MCF 10A (cell line): ENCODE measurements at regions of chr1 and their contacts with region 1.

Region 1: GRCh38 chr1:91021686-91022517 is at the start of gene ZNF644:
- DNase-seq: peak; percentile 96
- H3K4me3 Mint-ChIP-seq: peak within 1 kb of the TSS; percentile 89
- H3K27ac Mint-ChIP-seq: peak within 1 kb of the TSS; percentile 100
- H3K4me1 Mint-ChIP-seq: peaks cover 10% of the 10 kb centered on the region
- H3K27me3 Mint-ChIP-seq: no peaks in the 10 kb centered on the region
- CTCF ChIP-seq: no peak
- total RNA-seq, gene ZNF644: 43.5 and 46.2 TPM in 2 replicates

Region 2: DNA sequence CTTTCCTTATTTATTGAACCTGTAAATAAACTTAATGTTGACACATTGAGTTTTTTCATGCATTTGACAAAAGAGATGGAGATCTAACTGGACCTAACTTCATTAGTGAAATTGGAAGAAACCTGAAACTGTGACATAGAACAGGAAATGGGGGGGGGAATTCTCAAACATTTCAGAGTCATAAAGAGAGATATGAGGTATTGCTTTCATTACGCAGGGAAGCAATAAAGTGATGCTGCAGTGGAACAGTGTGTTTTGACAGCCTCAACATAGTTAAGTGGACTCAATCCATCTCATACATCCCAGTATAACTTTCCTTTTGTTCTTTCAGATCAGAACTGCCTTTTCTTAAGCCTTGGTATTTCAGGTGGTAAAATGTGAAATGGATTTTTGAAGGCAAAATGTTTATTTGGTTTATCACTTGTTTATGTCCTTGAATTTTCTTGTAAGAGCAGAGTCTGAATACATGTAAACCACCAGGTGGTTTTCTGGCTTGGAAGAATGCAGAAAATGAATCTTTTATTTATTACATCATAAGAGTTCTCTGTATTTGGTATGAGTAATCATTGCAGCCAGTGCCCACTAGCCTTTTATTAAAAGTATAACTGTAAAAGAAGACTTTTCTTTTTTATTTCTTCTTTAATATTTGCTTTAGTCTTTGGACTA is 894.5 kb before region 1 on chr1:
- CTCF ChIA-PET with region 1: no interaction called
- POLR2A ChIA-PET with region 1: no interaction called
- intact Hi-C with region 1: loop called (anchors 10 kb)
- DNase-seq: no peak
- H3K4me3 Mint-ChIP-seq: no peak overlapping the region
- H3K27ac Mint-ChIP-seq: no peak overlapping the region
- H3K4me1 Mint-ChIP-seq: no peaks in the 10 kb centered on the region
- H3K27me3 Mint-ChIP-seq: peaks cover 18% of the 10 kb centered on the region
- CTCF ChIP-seq: no peak

Region 3: DNA sequence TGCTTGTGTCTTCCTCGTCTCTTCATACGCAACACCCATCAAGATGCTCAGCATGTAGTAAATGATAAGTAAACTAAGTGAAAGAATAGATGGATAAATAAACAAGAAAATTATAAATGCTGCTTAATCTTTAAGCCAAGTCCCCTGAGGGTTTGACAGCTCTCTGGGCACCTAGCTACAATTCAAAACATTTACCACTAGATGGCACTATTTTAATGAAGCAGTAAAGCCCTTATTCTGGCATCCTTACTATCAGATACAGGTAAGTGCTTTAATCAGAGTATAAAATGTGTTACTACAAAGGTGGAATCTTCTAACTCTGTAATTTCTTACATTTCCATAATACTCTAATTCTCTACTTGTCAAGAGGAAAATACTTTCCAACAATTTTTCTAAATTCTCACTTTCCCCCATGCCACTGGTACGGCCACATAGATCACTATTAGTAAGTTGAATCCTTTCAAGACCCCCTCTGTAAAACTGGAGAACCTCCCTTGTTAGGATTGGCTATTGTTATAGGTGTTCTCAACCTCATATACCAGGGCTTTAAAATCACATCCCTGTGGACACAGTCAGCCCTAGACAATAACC is 442.6 kb before region 1 on chr1:
- CTCF ChIA-PET with region 1: interaction called, 3 read pairs
- POLR2A ChIA-PET with region 1: no interaction called
- intact Hi-C with region 1: loop called (anchors 10 kb)
- DNase-seq: peak; percentile 48
- H3K4me3 Mint-ChIP-seq: no peak overlapping the region
- H3K27ac Mint-ChIP-seq: no peak overlapping the region
- H3K4me1 Mint-ChIP-seq: peaks cover 8% of the 10 kb centered on the region
- H3K27me3 Mint-ChIP-seq: no peaks in the 10 kb centered on the region
- CTCF ChIP-seq: peak; percentile 41

Region 4: DNA sequence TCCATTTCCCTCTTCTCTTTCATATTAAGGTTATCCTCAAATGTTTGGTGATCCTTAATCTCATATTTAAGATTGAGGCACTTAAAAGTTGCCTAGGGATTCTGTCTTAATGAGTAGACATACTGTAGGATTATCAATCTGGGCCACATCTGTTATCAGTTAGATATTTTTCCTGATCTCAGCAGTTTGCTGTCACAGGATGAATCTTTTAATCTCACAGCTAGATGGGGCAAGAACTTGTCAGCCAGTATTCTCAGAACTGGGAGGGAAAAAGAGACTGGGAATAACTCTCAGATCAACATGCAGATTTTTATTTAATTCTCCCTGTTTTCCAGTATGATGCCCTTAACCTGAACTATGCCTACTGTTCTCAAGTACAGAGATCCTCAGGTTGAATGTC is 14.1 kb before region 1 on chr1:
- CTCF ChIA-PET with region 1: interaction called, 4 read pairs
- POLR2A ChIA-PET with region 1: interaction called, 11 read pairs
- intact Hi-C with region 1: no loop called
- DNase-seq: no peak
- H3K4me3 Mint-ChIP-seq: no peak overlapping the region
- H3K27ac Mint-ChIP-seq: no peak overlapping the region
- H3K4me1 Mint-ChIP-seq: peaks cover 46% of the 10 kb centered on the region
- H3K27me3 Mint-ChIP-seq: no peaks in the 10 kb centered on the region
- CTCF ChIP-seq: no peak